BJ (cell line): ENCODE measurements at regions of chr13 and their contacts with region 1.

Region 1: DNA sequence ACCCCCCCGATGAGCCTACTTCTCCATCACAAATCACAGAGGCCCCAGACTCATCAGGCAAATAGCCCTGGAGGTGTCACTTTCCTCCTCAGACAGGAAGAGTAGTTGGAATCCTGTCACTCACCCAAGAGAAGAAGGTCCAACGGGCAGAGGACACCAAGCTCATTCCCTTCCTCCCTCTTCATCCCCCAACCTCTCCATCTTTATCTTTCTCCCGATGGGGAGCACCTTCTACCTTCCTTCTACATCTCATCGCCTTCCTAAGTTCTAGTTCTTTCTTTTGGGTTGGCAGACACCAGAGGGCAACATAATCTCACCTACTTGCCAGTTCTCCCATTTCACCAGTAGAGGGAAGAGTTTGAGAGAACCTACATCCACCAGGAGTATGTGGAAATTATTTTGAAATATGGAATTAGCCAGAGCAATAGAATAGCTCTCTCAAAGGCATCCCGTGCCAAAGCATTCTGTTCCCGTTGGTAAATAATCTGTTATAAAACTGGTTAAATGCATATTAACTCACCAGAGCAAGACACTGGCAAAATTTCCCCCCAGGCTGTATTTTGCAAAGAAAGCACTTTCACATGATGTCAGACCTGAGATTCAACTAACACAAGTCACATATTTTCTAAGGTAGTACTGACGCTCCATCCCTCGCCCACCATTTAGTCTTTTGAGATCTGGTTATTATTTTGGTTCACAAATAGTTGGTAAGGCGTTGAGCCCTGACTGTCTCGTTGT is 55.0 kb downstream of the ZIC5 start:
- DNase-seq: no peak
- H3K4me3 ChIP-seq: no peak overlapping the region
- H3K27me3 ChIP-seq: peaks cover 5% of the 10 kb centered on the region; the same call in 1 of the 2 replicates
- CTCF ChIP-seq: peak; percentile 93

Region 2: DNA sequence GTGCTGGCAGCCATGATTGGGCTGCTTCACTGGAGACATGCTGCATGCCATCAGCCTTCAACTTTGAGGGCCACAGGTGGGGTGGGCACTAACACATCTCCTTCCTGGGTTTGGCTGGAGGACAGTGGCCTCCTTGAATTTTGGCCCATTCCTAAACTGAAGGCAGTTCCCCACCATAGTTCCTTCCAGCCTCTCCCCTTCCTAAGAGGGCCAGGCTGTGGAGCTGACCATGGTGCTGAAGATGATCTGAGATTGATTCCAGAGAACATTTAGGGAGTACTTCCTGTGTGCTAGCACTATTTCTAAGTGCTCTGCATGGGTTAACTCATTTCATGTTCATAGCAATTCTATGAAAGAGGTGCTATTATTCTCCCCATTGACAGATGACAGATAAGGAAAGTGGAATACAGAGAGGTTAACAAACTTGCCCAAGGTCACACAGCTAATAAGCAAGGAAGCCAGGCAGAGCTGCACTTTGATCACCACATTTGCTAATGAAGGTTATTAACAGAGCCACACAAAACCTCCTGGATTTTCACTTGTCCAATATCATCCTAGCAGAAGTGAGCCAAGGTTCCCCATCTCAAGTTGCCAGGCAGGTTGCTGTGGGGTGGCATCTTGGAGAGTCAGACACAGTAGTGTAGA is 120.2 kb before region 1 on chr13:
- CTCF ChIA-PET with region 1: no interaction called
- POLR2A ChIA-PET with region 1: no interaction called
- DNase-seq: no peak
- H3K4me3 ChIP-seq: no peak overlapping the region
- H3K27me3 ChIP-seq: 0 out of 2 replicates have a peak, but pooled peaks cover 1% of the 10 kb centered on the region
- CTCF ChIP-seq: no peak

Region 3: DNA sequence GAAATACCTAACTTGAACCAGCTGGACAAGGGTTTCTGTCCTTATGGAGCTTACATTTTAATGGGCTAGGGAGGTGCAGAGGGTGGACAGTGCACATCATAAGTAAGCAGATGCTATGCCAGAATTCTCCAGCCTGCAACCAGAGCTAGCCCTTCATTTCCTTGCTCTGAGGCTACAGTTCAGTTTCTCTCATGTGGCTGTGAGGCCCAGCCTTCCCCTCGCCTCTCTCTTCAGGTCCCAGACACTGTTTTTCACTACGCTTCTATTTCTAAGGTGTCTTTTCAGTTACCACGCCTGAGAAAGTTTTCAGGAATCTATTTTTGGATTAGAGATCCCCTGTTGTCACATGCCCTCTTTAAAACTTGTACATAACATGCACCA is 314.2 kb after region 1 on chr13:
- CTCF ChIA-PET with region 1: interaction called, 10 read pairs
- POLR2A ChIA-PET with region 1: no interaction called
- DNase-seq: no peak
- H3K4me3 ChIP-seq: no peak overlapping the region
- H3K27me3 ChIP-seq: no peaks in the 10 kb centered on the region
- CTCF ChIP-seq: no peak